ENCODE measurements at regions of chr19 and their contacts with region 1.

Region 1: GRCh38 chr19:40221858-40222837 is 4.0 kb upstream of the TTC9B start:
- DNase-seq: peak; percentile 93
- H3K4me3 Mint-ChIP-seq: no peak overlapping the region
- H3K27ac Mint-ChIP-seq: no peak overlapping the region
- H3K4me1 Mint-ChIP-seq: peaks cover 39% of the 10 kb centered on the region
- H3K27me3 Mint-ChIP-seq: peaks cover 1% of the 10 kb centered on the region
- CTCF ChIP-seq: peak; percentile 77

Region 2: GRCh38 chr19:40155749-40156265 is 66.3 kb before region 1 on chr19:
- CTCF ChIA-PET with region 1: interaction called, 3 read pairs
- POLR2A ChIA-PET with region 1: no interaction called
- intact Hi-C with region 1: loop called (anchors 5 kb)
- DNase-seq: peak; percentile 60
- H3K4me3 Mint-ChIP-seq: no peak overlapping the region
- H3K27ac Mint-ChIP-seq: no peak overlapping the region
- H3K4me1 Mint-ChIP-seq: no peaks in the 10 kb centered on the region
- H3K27me3 Mint-ChIP-seq: no peaks in the 10 kb centered on the region
- CTCF ChIP-seq: peak; percentile 17

Region 3: GRCh38 chr19:40174092-40174491 is 48.1 kb before region 1 on chr19:
- CTCF ChIA-PET with region 1: no interaction called
- POLR2A ChIA-PET with region 1: no interaction called
- intact Hi-C with region 1: no loop called
- DNase-seq: no peak
- H3K4me3 Mint-ChIP-seq: no peak overlapping the region
- H3K27ac Mint-ChIP-seq: no peak overlapping the region
- H3K4me1 Mint-ChIP-seq: no peaks in the 10 kb centered on the region
- H3K27me3 Mint-ChIP-seq: no peaks in the 10 kb centered on the region
- CTCF ChIP-seq: no peak

Region 4: GRCh38 chr19:40210921-40211320 is 11.2 kb before region 1 on chr19:
- CTCF ChIA-PET with region 1: no interaction called
- POLR2A ChIA-PET with region 1: no interaction called
- intact Hi-C with region 1: no loop called
- DNase-seq: no peak
- H3K4me3 Mint-ChIP-seq: no peak overlapping the region
- H3K27ac Mint-ChIP-seq: no peak overlapping the region
- H3K4me1 Mint-ChIP-seq: no peaks in the 10 kb centered on the region
- H3K27me3 Mint-ChIP-seq: peaks cover under 1% of the 10 kb centered on the region
- CTCF ChIP-seq: no peak